ENCODE measurements at regions of chr1 and their contacts with region 1.

Region 1: DNA sequence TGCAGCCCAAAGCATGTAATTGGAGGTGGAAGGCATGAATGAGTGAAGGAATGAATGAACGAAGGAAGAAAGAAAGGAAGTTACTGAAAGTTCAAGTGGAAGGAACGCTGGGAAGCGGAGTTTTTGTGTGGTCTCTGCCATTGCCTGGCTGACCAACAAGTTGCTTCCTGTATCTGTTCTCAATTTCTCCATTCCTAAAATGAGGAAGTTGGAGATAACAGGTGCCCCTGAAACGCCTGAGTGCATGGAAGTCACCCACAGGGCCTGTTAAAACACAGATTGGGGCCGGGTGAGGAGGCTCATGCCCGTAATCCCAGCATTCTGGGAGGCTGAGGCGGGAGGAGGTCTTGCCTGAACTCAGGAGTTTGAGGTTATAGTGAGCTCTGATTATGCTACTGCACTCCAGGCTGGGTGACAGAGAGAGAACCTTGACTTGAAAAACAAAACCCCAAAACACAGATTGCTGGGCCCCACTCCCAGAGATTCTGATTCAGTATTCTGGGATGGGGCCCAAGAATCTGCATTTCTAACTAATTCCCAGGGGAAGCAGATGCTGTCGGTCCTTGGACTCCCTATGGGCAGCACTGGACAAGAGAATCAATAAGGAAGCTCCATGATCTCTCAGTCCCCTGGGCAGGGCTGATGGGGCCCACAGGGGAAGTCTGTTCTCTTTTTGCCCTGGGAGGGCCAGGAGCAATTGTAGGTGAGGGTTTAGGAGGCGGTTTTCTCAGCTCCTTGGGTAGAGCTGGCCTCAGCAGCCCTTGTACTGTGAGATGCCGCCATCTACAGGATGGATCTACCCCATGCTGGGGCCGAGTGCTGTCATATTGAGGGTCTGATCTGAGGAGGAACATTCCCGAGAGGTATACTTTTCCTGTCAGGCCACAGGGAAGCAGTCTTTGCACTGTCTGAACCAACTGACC is 3.3 kb upstream of the CNR2 start:
- DNase-seq: peak; percentile 57 to 81
- ATAC-seq: peak; percentile 90 to 94 (median 92)
- H3K4me3 ChIP-seq: no peak overlapping the region
- H3K4me3 Mint-ChIP-seq: no peak overlapping the region
- H3K27ac ChIP-seq: no peak overlapping the region
- H3K27ac Mint-ChIP-seq: peak overlapping the region in 1 of 2 donors; percentile 12
- H3K4me1 ChIP-seq: peaks cover 50% of the 10 kb centered on the region
- H3K4me1 Mint-ChIP-seq: peaks cover 27 to 39% of the 10 kb centered on the region in 2 donors
- H3K27me3 ChIP-seq: no peaks in the 10 kb centered on the region
- H3K27me3 Mint-ChIP-seq: peaks cover 0 to 3% of the 10 kb centered on the region in 2 donors
- CTCF ChIP-seq: peak; percentile 79

Region 2: DNA sequence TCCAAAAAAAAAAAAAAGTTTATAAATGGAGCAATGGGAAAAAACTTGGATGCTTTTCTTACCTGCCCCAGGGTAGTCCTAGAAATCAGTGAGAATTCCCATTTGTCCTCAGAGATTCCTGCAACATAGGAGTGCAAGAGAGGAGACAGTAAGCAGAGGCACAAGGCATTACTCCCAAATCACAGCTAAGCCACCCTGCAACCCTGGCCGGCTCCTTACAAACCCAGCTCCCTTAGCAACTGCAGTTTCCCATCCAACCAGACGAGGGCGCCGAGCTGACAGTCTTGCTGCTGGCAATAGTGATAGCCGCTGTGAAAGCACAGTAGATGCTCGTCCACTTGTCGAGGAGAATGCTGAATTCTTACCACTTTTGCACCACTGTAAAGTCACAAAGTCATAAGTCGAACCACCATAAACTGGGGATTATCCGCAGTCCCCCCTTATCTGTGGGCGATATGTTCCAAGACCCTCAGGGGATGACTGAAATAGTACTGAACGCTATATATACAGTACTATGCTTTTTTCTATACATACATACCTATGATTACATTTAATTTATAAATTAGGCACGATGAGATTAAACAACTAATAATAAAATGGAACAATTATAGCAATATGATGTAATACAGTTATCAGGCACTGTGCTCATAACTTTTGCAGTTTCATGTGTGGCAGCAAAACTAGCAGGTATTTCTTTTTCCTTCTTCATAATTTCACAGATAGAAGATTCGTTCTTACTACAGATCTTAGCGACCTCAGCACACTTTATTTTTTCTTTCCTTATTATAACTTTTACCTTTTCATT is 144.2 kb before region 1 on chr1:
- intact Hi-C with region 1: loop called (anchors 1 kb)
- DNase-seq: peak; percentile 79 to 90
- ATAC-seq: peak; percentile 92 to 100 (median 99)
- H3K4me3 ChIP-seq: no peak overlapping the region
- H3K4me3 Mint-ChIP-seq: no peak overlapping the region
- H3K27ac ChIP-seq: no peak overlapping the region
- H3K27ac Mint-ChIP-seq: no peak overlapping the region
- H3K4me1 ChIP-seq: peaks cover 7% of the 10 kb centered on the region
- H3K4me1 Mint-ChIP-seq: peaks cover 0 to 3% of the 10 kb centered on the region in 2 donors
- H3K27me3 ChIP-seq: no peaks in the 10 kb centered on the region
- H3K27me3 Mint-ChIP-seq: no peaks in the 10 kb centered on the region
- CTCF ChIP-seq: peak; percentile 85

Region 3: DNA sequence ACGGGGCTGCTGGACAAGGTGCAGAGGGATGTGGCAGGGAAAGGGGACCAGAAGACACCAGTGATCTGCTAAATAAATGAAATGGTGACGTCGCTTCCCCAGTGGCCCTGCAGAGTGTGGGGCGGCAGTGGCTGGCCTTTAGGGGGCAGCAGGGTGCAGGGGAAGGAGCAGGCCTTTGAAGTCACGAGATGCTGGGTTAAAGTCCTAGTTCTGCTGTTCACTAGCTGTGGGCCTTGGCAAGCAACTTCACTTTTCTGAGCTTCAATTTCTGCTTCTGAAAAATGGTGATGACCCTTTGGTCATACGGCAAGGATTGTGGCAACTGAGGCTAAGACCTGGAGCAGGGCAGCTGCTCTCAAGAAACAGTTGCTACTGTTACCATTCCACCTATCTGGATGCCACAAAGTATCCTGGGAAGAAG is 106.7 kb before region 1 on chr1:
- intact Hi-C with region 1: loop called (anchors 1 kb)
- DNase-seq: peak; percentile 72 to 89
- ATAC-seq: peak; percentile 93 to 98 (median 98)
- H3K4me3 ChIP-seq: no peak overlapping the region
- H3K4me3 Mint-ChIP-seq: no peak overlapping the region
- H3K27ac ChIP-seq: peak overlapping the region; percentile 16
- H3K27ac Mint-ChIP-seq: peak overlapping the region; percentile 18 to 32
- H3K4me1 ChIP-seq: peaks cover 16% of the 10 kb centered on the region
- H3K4me1 Mint-ChIP-seq: peaks cover 0 to 22% of the 10 kb centered on the region in 2 donors
- H3K27me3 ChIP-seq: no peaks in the 10 kb centered on the region
- H3K27me3 Mint-ChIP-seq: no peaks in the 10 kb centered on the region
- CTCF ChIP-seq: peak; percentile 73